ENCODE measurements at regions of chr14 and their contacts with region 1.

Region 1: GRCh38 chr14:75487155-75487671 is 35.1 kb upstream of the BATF start:
- DNase-seq: no peak
- ATAC-seq: no peak

Region 2: GRCh38 chr14:75132382-75133086 is 354.7 kb before region 1 on chr14:
- intact Hi-C with region 1: loop called (anchors 10 kb)
- DNase-seq: no peak
- ATAC-seq: peak; percentile 72

Region 3: DNA sequence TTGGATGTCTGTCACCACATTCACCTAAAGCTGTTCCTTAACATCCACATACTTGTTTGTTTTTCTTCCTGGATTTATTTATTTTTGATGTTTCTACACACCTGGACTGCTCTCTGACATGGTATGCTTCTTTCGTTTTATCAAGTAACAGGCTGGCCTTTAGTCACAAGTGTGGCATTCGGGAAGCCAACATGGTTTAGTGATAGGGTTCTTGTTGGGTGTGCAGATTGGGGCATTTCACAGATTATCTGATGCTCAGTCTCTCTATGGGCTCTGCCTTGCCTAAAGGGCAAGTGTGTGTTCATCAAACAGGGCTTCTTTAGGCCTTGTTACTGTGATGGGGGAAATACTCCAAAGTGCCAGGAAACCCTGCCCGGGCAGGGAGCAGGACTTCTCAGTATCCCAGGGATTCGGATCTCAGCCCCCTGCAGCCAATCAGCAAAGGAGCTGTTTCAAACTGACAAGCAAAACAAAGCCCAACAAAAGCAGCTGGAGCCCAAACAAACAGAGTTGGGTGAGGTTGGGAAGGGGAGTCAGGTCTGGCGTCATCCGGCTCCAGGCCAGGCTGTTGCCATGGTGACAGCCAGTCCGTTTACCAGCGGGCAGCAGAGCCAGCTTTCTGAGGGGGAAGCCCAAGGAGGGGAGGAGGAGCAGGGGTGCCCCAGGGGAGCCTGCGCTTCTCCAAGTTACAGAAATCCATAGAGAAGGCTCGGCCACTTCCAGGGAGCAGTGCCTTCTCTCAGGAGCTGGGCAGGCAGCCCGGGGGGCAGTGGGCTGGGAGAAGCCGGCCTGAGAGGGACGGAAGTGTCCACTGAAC is 176.7 kb before region 1 on chr14:
- intact Hi-C with region 1: loop called (anchors 5 kb)
- DNase-seq: peak; percentile 90
- ATAC-seq: peak; percentile 83

Region 4: GRCh38 chr14:75531660-75532317 is 44.6 kb after region 1 on chr14:
- intact Hi-C with region 1: no loop called
- DNase-seq: no peak
- ATAC-seq: no peak